Endothelial cell of umbilical vein (primary cell): ENCODE measurements at regions of chr13 and their contacts with region 1.

Region 1: DNA sequence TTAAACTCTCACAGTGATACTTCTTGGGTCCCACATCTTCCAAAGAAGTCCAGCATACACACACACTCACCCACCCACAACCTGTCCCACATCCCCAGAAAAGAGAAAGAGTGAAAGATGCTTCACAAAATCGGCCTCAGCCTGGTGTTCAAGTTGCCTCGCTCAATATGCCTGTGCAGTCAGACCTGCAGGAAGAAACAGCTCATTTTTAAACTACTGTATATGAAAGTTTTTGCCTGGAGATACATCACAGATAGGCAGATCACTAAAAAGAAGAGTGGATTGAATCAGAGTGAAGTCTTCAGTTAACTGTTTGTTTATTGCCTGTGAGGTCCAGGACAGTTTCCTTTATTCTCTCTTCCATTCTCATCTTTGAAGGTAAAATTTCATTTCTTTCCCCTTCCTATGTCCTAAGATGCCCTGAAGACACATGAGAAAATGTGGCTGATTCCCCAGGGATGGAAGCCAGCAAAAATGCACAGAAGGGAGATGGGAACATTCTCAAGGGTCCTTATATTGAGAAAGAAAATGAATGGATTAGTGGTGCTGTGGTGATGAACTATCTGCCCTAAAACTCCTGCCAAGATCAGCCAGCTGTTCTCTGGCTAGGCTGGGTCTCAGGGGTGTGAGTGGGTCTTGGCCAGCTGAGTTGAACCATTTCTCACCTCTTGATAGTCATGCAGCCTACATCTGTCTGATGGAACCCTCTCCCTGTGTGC is 259.0 kb downstream of the ITGBL1 start:
- DNase-seq: no peak
- H3K4me3 ChIP-seq: no peak overlapping the region
- H3K27ac ChIP-seq: no peak overlapping the region
- H3K4me1 ChIP-seq: no peaks in the 10 kb centered on the region
- H3K27me3 ChIP-seq: no peaks in the 10 kb centered on the region
- CTCF ChIP-seq: no peak
- POLR2A ChIP-seq: no peak

Region 2: GRCh38 chr13:101433895-101434294 is 277.6 kb before region 1 on chr13:
- CTCF ChIA-PET with region 1: no interaction called
- POLR2A ChIA-PET with region 1: no interaction called
- dilution Hi-C with region 1: no loop called
- intact Hi-C with region 1: no loop called
- DNase-seq: no peak
- H3K4me3 ChIP-seq: no peak overlapping the region
- H3K27ac ChIP-seq: no peak overlapping the region
- H3K4me1 ChIP-seq: no peaks in the 10 kb centered on the region
- H3K27me3 ChIP-seq: no peaks in the 10 kb centered on the region
- CTCF ChIP-seq: no peak
- POLR2A ChIP-seq: no peak

Region 3: GRCh38 chr13:101618440-101619187 is 92.9 kb before region 1 on chr13:
- CTCF ChIA-PET with region 1: no interaction called
- POLR2A ChIA-PET with region 1: no interaction called
- dilution Hi-C with region 1: no loop called
- intact Hi-C with region 1: no loop called
- DNase-seq: no peak
- H3K4me3 ChIP-seq: no peak overlapping the region
- H3K27ac ChIP-seq: no peak overlapping the region
- H3K4me1 ChIP-seq: peaks cover 13% of the 10 kb centered on the region
- H3K27me3 ChIP-seq: no peaks in the 10 kb centered on the region
- CTCF ChIP-seq: no peak
- POLR2A ChIP-seq: no peak

Region 4: DNA sequence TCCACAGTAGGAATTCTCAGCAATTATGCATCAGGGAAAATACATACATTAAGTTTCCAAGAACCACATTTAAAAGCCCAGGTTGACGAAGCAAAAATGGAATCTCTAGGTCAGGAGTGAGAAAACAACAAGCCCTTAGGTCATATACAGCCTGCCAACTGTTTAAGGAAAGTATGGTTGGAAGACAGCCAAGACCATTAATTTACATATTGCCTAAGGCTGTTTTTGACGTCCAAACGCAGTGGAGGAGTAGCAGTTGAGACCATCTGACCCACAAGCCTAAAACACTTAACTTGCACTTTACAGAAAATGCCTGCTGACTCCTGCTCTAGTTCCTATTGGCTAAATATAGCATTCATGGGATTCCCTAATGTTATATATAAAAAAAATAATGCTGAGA is 40.0 kb after region 1 on chr13:
- CTCF ChIA-PET with region 1: interaction called, 3 read pairs
- POLR2A ChIA-PET with region 1: no interaction called
- dilution Hi-C with region 1: no loop called
- intact Hi-C with region 1: loop called (anchors 1 kb)
- DNase-seq: peak; percentile 86
- H3K4me3 ChIP-seq: no peak overlapping the region
- H3K27ac ChIP-seq: no peak overlapping the region
- H3K4me1 ChIP-seq: peaks cover 6% of the 10 kb centered on the region
- H3K27me3 ChIP-seq: no peaks in the 10 kb centered on the region
- CTCF ChIP-seq: no peak
- POLR2A ChIP-seq: no peak